ENCODE measurements at regions of chr15 and their contacts with region 1.

Region 1: GRCh38 chr15:40789999-40790398 is 16.9 kb upstream of the ZFYVE19 start:
- DNase-seq: no peak
- ATAC-seq: no peak
- H3K4me3 ChIP-seq: no peak overlapping the region
- H3K27ac ChIP-seq: no peak overlapping the region
- H3K4me1 ChIP-seq: peaks cover 93 to 98% of the 10 kb centered on the region in 2 experiments
- H3K27me3 ChIP-seq: no peaks in the 10 kb centered on the region
- CTCF ChIP-seq: no peak
- POLR2A ChIP-seq: no peak
- RAD21 ChIP-seq: no peak

Region 2: GRCh38 chr15:40754883-40755811 is 34.9 kb before region 1 on chr15 and contains the start of gene RMDN3:
- CTCF ChIA-PET with region 1: no interaction called
- POLR2A ChIA-PET with region 1: interaction called, 13 read pairs
- RAD21 ChIA-PET with region 1: no interaction called
- intact Hi-C with region 1: no loop called
- DNase-seq: peak; percentile 80
- ATAC-seq: peak; percentile 93
- H3K4me3 ChIP-seq: peak within 1 kb of the TSS; percentile 99
- H3K27ac ChIP-seq: peak within 1 kb of the TSS; percentile 74
- H3K4me1 ChIP-seq: peaks cover 7 to 17% of the 10 kb centered on the region in 2 experiments
- H3K27me3 ChIP-seq: no peaks in the 10 kb centered on the region
- CTCF ChIP-seq: no peak
- POLR2A ChIP-seq: peak; percentile 74
- RAD21 ChIP-seq: peak; percentile 19; the same call in 1 of the 2 replicates
- total RNA-seq, gene RMDN3: 21.5 TPM

Measured in HCT116 (cell line).